Heart left ventricle (tissue), 16 donors: ENCODE measurements at regions of chr11 and their contacts with region 1.

Region 1: DNA sequence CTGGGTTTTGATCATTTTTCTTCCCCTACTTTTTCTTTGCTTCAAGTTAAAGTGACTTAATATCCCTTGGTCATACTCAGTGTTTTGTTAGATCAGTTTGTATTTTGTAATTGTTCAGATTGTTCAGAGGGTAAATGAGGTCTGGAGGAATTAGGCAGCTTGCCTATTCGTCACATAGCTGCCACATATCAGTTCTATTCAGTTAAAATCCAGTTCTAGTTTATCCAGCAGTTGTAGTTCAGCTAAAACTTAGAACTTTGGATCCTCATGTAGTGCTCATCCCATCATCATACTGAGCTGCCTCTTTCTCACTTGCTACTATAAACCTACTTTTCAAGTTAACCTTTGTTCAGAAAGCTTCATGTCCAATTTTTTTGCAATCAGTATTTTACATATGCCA is 47.1 kb upstream of the DEPDC7 start:
- DNase-seq: no peak
- ATAC-seq: no peak
- H3K4me3 ChIP-seq: no peak overlapping the region
- H3K27ac ChIP-seq: no peak overlapping the region
- H3K4me1 ChIP-seq: no peaks in the 10 kb centered on the region
- H3K27me3 ChIP-seq: no peaks in the 10 kb centered on the region
- CTCF ChIP-seq: no peak
- POLR2A ChIP-seq: no peak

Region 2: DNA sequence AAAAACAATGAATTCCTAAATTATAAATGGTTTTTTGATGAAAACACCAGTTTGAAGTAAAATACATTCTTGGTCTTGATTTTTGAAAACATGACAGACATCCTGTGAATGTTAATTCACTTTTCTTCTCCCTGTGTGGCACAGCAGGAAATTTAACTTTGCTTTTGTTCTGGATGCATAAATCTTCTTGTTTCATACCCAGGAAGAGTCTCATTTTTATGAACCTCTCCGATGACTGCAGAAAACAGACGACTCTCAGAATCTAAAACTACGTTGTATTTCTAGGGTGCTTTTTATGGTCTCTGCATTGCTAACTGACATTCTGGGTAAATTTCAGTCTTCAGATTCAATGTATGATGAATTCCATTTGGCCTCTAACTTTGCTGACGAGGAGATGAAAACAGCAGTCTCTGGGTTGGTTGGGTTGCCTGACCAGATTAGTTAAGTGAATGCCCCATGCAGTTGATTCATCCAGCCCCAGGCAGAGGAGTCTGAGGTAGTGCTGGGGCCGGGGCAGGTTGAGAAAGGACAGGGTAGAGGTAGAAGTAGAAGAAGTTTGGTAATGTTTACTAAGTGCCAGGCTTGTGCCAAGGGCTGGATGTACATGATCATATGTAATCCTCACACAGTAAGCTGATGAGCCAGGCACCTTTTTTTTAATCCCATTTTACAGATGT is 90.9 kb after region 1 on chr11:
- intact Hi-C with region 1: loop called in 3 of 10 experiments (anchors 5 kb)
- DNase-seq: no peak
- ATAC-seq: no peak
- H3K4me3 ChIP-seq: no peak overlapping the region
- H3K27ac ChIP-seq: peak overlapping the region in 1 of 12 donors; percentile 1
- H3K4me1 ChIP-seq: peaks cover 0 to 19% (median 2%) of the 10 kb centered on the region in 12 donors
- H3K27me3 ChIP-seq: no peaks in the 10 kb centered on the region
- CTCF ChIP-seq: no peak
- POLR2A ChIP-seq: no peak